ENCODE measurements at regions of chr3 and their contacts with region 1.

Region 1: GRCh38 chr3:139111392-139112229 is 66.9 kb upstream of the PRR23C start:
- DNase-seq: peak in 3 of 4 donors; percentile 28 to 59 (median 55)
- ATAC-seq: peak; percentile 94
- H3K4me3 ChIP-seq: no peak overlapping the region
- H3K27ac ChIP-seq: no peak overlapping the region
- H3K4me1 ChIP-seq: no peaks in the 10 kb centered on the region
- H3K27me3 ChIP-seq: peaks cover 0 to 9% of the 10 kb centered on the region in 2 donors
- CTCF ChIP-seq: peak; percentile 53 to 67

Region 2: GRCh38 chr3:139329345-139329850 is 217.8 kb after region 1 on chr3:
- intact Hi-C with region 1: loop called in 1 of 2 experiments (anchors 5 kb)
- DNase-seq: peak; percentile 50 to 99 (median 82)
- ATAC-seq: peak; percentile 100
- H3K4me3 ChIP-seq: no peak overlapping the region
- H3K27ac ChIP-seq: no peak overlapping the region
- H3K4me1 ChIP-seq: peaks cover 0 to 10% of the 10 kb centered on the region in 2 donors
- H3K27me3 ChIP-seq: peaks cover 0 to 33% of the 10 kb centered on the region in 2 donors
- CTCF ChIP-seq: peak; percentile 94 to 98